Activated B cell treated with CpG ODN at 0.5 μM for 24 hours (primary cell): ENCODE measurements at regions of chr1 and their contacts with region 1.

Region 1: GRCh38 chr1:224203243-224204016 is 20.4 kb downstream of the DEGS1 start:
- DNase-seq: peak; percentile 45
- ATAC-seq: peak; percentile 82
- H3K4me3 Mint-ChIP-seq: peak overlapping the region; percentile 72
- H3K27ac Mint-ChIP-seq: peak overlapping the region; percentile 74
- H3K4me1 Mint-ChIP-seq: peaks cover 34% of the 10 kb centered on the region
- H3K27me3 Mint-ChIP-seq: no peaks in the 10 kb centered on the region
- CTCF ChIP-seq: no peak

Region 2: DNA sequence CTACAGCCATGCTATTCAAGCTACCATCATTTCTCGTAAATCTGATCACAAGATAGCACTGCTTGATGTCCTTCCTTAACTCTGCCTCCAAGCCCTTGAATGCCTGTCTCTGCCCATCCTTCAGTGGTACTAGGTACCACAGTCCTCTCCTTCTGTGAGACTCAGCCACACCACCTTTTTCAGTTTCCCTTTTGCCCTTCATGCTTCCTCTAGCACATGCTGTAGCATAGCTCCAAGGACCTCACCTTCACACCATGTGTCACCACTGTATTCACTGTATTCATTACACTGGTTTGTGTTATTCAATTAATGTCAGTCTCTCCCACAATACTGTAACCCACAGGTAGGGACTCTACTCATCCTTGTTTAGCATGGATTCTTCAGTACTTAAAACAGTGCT is 349.7 kb before region 1 on chr1:
- CTCF ChIA-PET with region 1: no interaction called
- POLR2A ChIA-PET with region 1: no interaction called
- intact Hi-C with region 1: no loop called
- DNase-seq: no peak
- ATAC-seq: no peak
- H3K4me3 Mint-ChIP-seq: no peak overlapping the region
- H3K27ac Mint-ChIP-seq: no peak overlapping the region
- H3K4me1 Mint-ChIP-seq: peaks cover 4% of the 10 kb centered on the region
- H3K27me3 Mint-ChIP-seq: no peaks in the 10 kb centered on the region
- CTCF ChIP-seq: no peak

Region 3: GRCh38 chr1:224168859-224169380 is 34.5 kb before region 1 on chr1:
- CTCF ChIA-PET with region 1: no interaction called
- POLR2A ChIA-PET with region 1: interaction called, 5 read pairs
- intact Hi-C with region 1: loop called (anchors 1 kb)
- DNase-seq: no peak
- ATAC-seq: peak; percentile 89
- H3K4me3 Mint-ChIP-seq: peak overlapping the region; percentile 5
- H3K27ac Mint-ChIP-seq: peak overlapping the region; percentile 8
- H3K4me1 Mint-ChIP-seq: peaks cover 35% of the 10 kb centered on the region
- H3K27me3 Mint-ChIP-seq: no peaks in the 10 kb centered on the region
- CTCF ChIP-seq: no peak

Region 4: GRCh38 chr1:224192082-224192788 is 11.2 kb before region 1 on chr1:
- CTCF ChIA-PET with region 1: no interaction called
- POLR2A ChIA-PET with region 1: interaction called, 20 read pairs
- intact Hi-C with region 1: no loop called
- DNase-seq: no peak
- ATAC-seq: peak; percentile 78
- H3K4me3 Mint-ChIP-seq: peak overlapping the region; percentile 15
- H3K27ac Mint-ChIP-seq: peak overlapping the region; percentile 41
- H3K4me1 Mint-ChIP-seq: peaks cover 40% of the 10 kb centered on the region
- H3K27me3 Mint-ChIP-seq: no peaks in the 10 kb centered on the region
- CTCF ChIP-seq: no peak

Region 5: GRCh38 chr1:224213438-224214112 is 10.1 kb after region 1 on chr1:
- CTCF ChIA-PET with region 1: no interaction called
- POLR2A ChIA-PET with region 1: interaction called, 5 read pairs
- intact Hi-C with region 1: loop called (anchors 1 kb)
- DNase-seq: no peak
- ATAC-seq: peak; percentile 72
- H3K4me3 Mint-ChIP-seq: no peak overlapping the region
- H3K27ac Mint-ChIP-seq: peak overlapping the region; percentile 85
- H3K4me1 Mint-ChIP-seq: peaks cover 29% of the 10 kb centered on the region
- H3K27me3 Mint-ChIP-seq: no peaks in the 10 kb centered on the region
- CTCF ChIP-seq: no peak

Region 6: GRCh38 chr1:224226849-224227502 is 23.5 kb after region 1 on chr1:
- CTCF ChIA-PET with region 1: no interaction called
- POLR2A ChIA-PET with region 1: no interaction called
- intact Hi-C with region 1: no loop called
- DNase-seq: no peak
- ATAC-seq: no peak
- H3K4me3 Mint-ChIP-seq: no peak overlapping the region
- H3K27ac Mint-ChIP-seq: no peak overlapping the region
- H3K4me1 Mint-ChIP-seq: no peaks in the 10 kb centered on the region
- H3K27me3 Mint-ChIP-seq: peaks cover 2% of the 10 kb centered on the region
- CTCF ChIP-seq: no peak

Region 7: DNA sequence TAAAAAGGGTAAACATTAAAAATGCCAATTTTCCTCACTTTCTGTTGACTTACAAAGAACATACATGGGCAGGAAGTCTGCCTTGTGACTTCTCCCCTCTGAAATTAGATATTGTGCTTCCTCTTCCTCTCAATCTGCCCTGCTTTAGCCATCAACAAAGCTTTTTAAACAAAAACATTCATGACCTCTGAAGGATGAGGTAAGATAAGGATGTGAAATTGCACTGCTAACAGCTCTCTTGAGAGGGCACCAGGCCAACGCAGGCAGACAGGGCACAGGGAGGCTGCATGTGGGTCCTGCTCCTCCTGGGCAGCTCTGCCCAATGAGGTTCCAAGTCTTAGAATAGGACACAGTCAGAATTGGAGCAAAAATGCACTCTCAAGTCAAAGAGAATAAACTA is 41.8 kb after region 1 on chr1:
- CTCF ChIA-PET with region 1: no interaction called
- POLR2A ChIA-PET with region 1: interaction called, 7 read pairs
- intact Hi-C with region 1: loop called (anchors 1 kb)
- DNase-seq: peak; percentile 17
- ATAC-seq: peak; percentile 97
- H3K4me3 Mint-ChIP-seq: peak overlapping the region; percentile 44
- H3K27ac Mint-ChIP-seq: peak overlapping the region; percentile 90
- H3K4me1 Mint-ChIP-seq: peaks cover 28% of the 10 kb centered on the region
- H3K27me3 Mint-ChIP-seq: no peaks in the 10 kb centered on the region
- CTCF ChIP-seq: no peak